Activated naive CD4-positive, alpha-beta T cell treated with anti-CD3 and anti-CD28 coated beads for 36 hours (primary cell): ENCODE measurements at regions of chr20 and their contacts with region 1.

Region 1: DNA sequence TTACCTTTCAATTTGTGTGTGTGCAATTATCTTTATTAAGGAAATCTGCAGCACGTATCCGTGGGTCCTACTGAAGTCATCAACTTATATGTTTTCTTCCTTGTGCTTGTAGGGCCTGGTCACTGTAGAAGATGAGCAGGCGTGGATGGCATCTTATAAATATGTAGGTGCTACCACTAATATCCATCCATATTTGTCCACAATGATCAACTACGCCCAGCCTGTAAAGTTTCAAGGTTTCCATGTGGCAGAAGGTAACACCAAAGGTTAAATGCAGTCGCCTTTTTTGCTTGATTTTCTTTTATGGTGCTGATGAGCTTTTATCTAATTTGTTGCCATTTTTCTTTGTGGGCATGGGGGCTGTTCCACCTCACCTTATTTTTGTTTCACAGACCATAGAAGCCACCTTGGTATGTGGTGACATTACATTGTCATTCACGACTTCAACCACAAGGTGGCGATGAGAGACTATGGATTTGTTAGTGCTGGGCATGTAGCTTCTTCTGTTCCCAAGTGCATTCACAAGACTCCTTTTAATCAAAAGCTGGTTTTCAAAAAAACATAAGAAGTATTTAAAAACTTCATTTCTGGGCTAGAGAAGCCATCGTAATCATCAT is 106.5 kb upstream of the LAMP5 start:
- DNase-seq: peak; percentile 74
- H3K4me3 Mint-ChIP-seq: no peak overlapping the region
- H3K27ac Mint-ChIP-seq: no peak overlapping the region
- H3K4me1 Mint-ChIP-seq: no peaks in the 10 kb centered on the region
- H3K27me3 Mint-ChIP-seq: no peaks in the 10 kb centered on the region

Region 2: GRCh38 chr20:8930691-8931090 is 477.2 kb before region 1 on chr20:
- CTCF ChIA-PET with region 1: no interaction called
- intact Hi-C with region 1: no loop called
- DNase-seq: no peak
- H3K4me3 Mint-ChIP-seq: no peak overlapping the region
- H3K27ac Mint-ChIP-seq: no peak overlapping the region
- H3K4me1 Mint-ChIP-seq: no peaks in the 10 kb centered on the region
- H3K27me3 Mint-ChIP-seq: no peaks in the 10 kb centered on the region

Region 3: GRCh38 chr20:9392892-9393857 is 14.7 kb before region 1 on chr20:
- CTCF ChIA-PET with region 1: interaction called, 12 read pairs
- intact Hi-C with region 1: no loop called
- DNase-seq: peak; percentile 34
- H3K4me3 Mint-ChIP-seq: no peak overlapping the region
- H3K27ac Mint-ChIP-seq: no peak overlapping the region
- H3K4me1 Mint-ChIP-seq: no peaks in the 10 kb centered on the region
- H3K27me3 Mint-ChIP-seq: no peaks in the 10 kb centered on the region

Region 4: DNA sequence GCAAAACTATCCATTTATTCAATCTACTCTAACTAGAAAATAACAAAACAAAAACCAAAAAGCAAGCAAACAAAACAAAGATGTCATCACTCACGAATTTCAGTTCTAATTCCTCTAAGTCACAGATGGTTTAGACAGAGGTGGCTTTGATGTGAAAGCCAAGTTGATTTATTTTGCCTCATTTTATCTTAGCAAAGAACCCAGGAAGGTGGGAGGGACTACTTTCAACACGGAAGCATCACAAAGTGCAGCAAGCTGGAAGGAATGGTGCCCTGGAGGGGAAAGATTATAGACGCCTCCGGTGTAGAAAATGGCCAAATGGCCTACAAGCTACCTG is 194.9 kb after region 1 on chr20:
- CTCF ChIA-PET with region 1: interaction called, 14 read pairs
- intact Hi-C with region 1: no loop called
- DNase-seq: no peak
- H3K4me3 Mint-ChIP-seq: no peak overlapping the region
- H3K27ac Mint-ChIP-seq: no peak overlapping the region
- H3K4me1 Mint-ChIP-seq: no peaks in the 10 kb centered on the region
- H3K27me3 Mint-ChIP-seq: no peaks in the 10 kb centered on the region

Region 5: DNA sequence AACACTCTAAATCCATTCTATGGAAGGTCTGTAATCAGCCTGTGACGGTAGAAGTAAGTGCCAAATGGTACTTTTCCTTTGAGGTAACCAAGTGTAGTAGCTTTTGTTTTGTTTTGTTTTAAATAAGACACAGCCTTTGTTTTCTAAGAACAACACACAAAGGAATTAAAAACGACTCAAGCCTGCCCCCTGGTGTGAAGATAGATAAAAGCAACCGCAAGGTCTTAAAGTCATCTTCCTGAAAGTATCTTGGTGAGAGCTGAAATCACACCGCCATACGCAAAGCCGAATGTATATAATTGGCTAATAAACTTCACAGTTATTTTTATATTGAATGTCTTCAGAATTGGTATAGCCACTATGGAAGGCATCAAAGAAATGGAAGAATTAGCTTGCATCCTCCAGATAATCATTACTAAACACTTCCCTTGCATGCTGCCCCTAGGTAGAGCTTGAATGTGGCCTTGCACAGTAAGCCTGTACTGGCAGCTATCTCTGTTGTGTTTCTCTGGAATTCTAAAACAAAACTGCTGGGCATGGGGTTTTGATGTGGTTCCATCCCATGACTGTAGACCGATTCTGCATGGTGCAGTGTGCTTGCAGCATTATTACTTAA is 202.1 kb after region 1 on chr20:
- CTCF ChIA-PET with region 1: interaction called, 93 read pairs
- intact Hi-C with region 1: loop called (anchors 1 kb)
- DNase-seq: peak; percentile 72
- H3K4me3 Mint-ChIP-seq: no peak overlapping the region
- H3K27ac Mint-ChIP-seq: no peak overlapping the region
- H3K4me1 Mint-ChIP-seq: no peaks in the 10 kb centered on the region
- H3K27me3 Mint-ChIP-seq: peaks cover 8% of the 10 kb centered on the region

Region 6: GRCh38 chr20:9912858-9913434 is 505.0 kb after region 1 on chr20:
- CTCF ChIA-PET with region 1: interaction called, 5 read pairs
- intact Hi-C with region 1: loop called (anchors 1 kb)
- DNase-seq: peak; percentile 40
- H3K4me3 Mint-ChIP-seq: no peak overlapping the region
- H3K27ac Mint-ChIP-seq: no peak overlapping the region
- H3K4me1 Mint-ChIP-seq: no peaks in the 10 kb centered on the region
- H3K27me3 Mint-ChIP-seq: peaks cover 24% of the 10 kb centered on the region

Region 7: GRCh38 chr20:10090588-10091166 is 682.8 kb after region 1 on chr20:
- CTCF ChIA-PET with region 1: interaction called, 4 read pairs
- intact Hi-C with region 1: loop called (anchors 2 kb)
- DNase-seq: peak; percentile 27
- H3K4me3 Mint-ChIP-seq: no peak overlapping the region
- H3K27ac Mint-ChIP-seq: no peak overlapping the region
- H3K4me1 Mint-ChIP-seq: no peaks in the 10 kb centered on the region
- H3K27me3 Mint-ChIP-seq: peaks cover 3% of the 10 kb centered on the region